ENCODE measurements at regions of chrX and their contacts with region 1.

Region 1: DNA sequence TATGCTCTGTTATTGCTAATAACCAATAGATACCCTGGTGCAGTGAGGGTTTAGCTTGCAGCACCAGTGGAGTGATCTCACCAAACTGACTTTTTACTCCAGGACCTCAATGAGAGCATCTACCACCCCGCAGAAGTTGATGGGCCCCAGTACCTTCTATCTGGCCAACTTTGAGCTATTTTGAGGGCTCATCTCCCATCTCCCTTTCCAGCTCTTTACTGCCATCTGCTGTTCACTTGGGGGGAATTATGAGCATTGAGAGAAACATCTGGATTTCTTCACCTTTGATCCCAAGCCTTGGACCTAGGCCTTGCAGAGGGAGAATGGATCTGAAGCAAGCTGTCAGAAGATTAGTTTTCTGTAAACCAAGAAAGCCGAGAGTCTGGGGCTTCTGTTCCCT is 143.6 kb downstream of the TMEM164 start:
- DNase-seq: peak; percentile 16
- H3K4me3 Mint-ChIP-seq: no peak overlapping the region
- H3K27ac Mint-ChIP-seq: no peak overlapping the region
- H3K4me1 Mint-ChIP-seq: peaks cover 5% of the 10 kb centered on the region
- H3K27me3 Mint-ChIP-seq: no peaks in the 10 kb centered on the region

Region 2: DNA sequence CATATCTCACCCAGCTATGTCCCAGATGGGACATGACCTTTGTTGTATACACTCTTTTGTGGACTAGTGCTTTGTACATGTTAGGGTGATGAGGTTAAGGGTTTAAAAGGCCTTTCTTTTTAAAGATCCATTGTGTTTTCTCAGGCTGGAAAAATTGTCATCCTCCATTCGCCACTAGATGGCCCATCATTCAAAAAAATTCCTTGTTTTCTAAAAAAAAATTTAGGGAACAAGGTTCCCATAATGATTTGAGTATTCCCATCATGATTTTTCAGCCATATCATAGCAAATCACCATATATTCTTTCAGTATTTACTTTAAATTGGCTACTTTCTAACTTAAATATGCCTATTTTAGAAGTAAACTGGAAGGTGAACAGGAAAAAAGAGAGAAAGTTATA is 235.5 kb before region 1 on chrX:
- CTCF ChIA-PET with region 1: interaction called, 4 read pairs
- POLR2A ChIA-PET with region 1: no interaction called
- intact Hi-C with region 1: loop called (anchors 1 kb)
- DNase-seq: no peak
- H3K4me3 Mint-ChIP-seq: no peak overlapping the region
- H3K27ac Mint-ChIP-seq: no peak overlapping the region
- H3K4me1 Mint-ChIP-seq: no peaks in the 10 kb centered on the region
- H3K27me3 Mint-ChIP-seq: no peaks in the 10 kb centered on the region

Region 3: GRCh38 chrX:110032534-110033147 is 113.9 kb before region 1 on chrX:
- CTCF ChIA-PET with region 1: no interaction called
- POLR2A ChIA-PET with region 1: no interaction called
- intact Hi-C with region 1: no loop called
- DNase-seq: no peak
- H3K4me3 Mint-ChIP-seq: no peak overlapping the region
- H3K27ac Mint-ChIP-seq: no peak overlapping the region
- H3K4me1 Mint-ChIP-seq: peaks cover 14% of the 10 kb centered on the region
- H3K27me3 Mint-ChIP-seq: no peaks in the 10 kb centered on the region

Region 4: DNA sequence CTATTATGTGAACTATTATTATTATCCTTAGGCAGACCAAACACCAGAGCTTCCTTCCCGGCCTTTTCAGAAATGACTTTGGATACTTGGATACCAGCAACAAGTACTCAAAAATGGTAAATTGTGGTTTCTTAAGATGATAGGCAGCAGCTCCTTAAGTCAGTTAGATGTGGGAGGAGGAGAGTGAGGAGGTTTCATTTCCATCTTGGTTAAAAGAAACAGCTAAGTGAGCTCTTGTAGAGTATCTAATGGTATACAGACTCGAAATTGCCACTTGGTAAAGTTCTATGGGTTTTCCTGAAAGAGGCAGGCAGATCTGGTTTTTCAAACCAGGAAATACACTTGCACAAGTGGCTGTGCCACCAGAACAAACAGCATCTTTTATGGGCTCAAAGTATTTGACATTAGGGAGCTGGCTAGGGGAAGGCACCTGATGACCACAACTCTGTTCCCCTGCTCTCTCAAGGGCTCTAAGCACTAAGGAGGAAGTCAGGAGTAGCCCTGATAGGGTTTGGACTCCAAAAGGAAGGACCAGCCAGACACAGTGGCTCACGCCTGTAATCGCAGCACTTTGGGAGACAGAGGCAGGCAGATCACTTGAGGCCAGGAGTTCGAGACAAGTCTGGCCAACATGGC is 12.7 kb before region 1 on chrX:
- CTCF ChIA-PET with region 1: interaction called, 21 read pairs
- POLR2A ChIA-PET with region 1: no interaction called
- intact Hi-C with region 1: no loop called
- DNase-seq: no peak
- H3K4me3 Mint-ChIP-seq: no peak overlapping the region
- H3K27ac Mint-ChIP-seq: peak overlapping the region; percentile 8
- H3K4me1 Mint-ChIP-seq: peaks cover 18% of the 10 kb centered on the region
- H3K27me3 Mint-ChIP-seq: no peaks in the 10 kb centered on the region

Region 5: DNA sequence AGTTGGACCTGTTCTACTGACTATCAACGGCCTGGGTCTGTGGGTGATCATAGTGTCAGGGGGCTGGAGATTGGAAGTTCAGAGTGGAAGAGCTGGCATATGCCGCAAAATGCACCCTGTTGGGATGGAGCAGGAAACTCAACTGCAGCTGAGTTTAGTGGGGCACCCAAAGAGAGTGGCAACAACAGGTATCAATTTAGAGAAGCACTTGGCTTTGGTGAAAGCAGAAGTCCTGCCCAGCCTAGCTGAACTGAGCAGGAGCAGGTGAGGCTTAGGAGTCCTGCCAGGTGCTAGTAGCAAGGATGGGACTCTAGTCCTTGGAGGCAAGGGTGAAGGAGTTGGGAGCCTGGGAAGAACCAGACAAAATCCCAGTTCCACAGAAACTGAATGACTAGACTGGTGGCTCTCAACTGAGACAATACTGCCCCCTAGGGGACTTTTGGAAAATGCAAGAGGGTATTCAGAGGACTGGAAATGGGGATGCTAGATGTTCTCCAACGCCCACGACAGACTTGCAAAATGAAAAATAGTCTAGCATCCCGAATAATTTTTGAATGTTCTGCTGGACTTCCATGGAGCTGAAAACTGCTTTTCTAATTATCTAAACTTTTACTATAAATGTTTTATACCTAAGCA is 261.5 kb after region 1 on chrX:
- CTCF ChIA-PET with region 1: interaction called, 522 read pairs
- POLR2A ChIA-PET with region 1: no interaction called
- intact Hi-C with region 1: no loop called
- DNase-seq: peak; percentile 31
- H3K4me3 Mint-ChIP-seq: no peak overlapping the region
- H3K27ac Mint-ChIP-seq: no peak overlapping the region
- H3K4me1 Mint-ChIP-seq: peaks cover 3% of the 10 kb centered on the region
- H3K27me3 Mint-ChIP-seq: no peaks in the 10 kb centered on the region

Region 6: DNA sequence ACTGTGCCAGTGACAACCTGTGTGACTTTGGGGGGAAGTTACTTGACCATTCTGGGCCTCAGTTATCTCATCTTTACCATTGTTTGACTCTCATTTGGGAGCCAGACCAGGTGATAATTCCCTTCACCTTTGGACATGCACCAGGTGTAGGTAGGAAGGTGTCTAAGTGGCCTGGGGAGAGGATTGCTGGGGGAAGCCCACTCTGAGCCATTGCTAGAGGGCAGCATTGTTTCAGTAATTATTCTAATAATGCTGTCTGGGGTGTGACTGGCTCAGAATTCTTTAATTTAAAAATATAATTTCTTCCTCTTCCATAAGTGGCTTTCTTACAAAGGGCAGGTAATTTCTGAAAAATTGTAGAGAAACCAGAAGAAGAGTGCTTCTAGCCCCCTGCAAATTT is 316.4 kb after region 1 on chrX:
- CTCF ChIA-PET with region 1: no interaction called
- POLR2A ChIA-PET with region 1: no interaction called
- intact Hi-C with region 1: no loop called
- DNase-seq: no peak
- H3K4me3 Mint-ChIP-seq: no peak overlapping the region
- H3K27ac Mint-ChIP-seq: no peak overlapping the region
- H3K4me1 Mint-ChIP-seq: no peaks in the 10 kb centered on the region
- H3K27me3 Mint-ChIP-seq: peaks cover 7% of the 10 kb centered on the region

Measured in activated CD4-positive, alpha-beta memory T cell treated with anti-CD3 and anti-CD28 coated beads for 36 hours (primary cell).